ENCODE measurements at regions of chr15 and their contacts with region 1.

Region 1: DNA sequence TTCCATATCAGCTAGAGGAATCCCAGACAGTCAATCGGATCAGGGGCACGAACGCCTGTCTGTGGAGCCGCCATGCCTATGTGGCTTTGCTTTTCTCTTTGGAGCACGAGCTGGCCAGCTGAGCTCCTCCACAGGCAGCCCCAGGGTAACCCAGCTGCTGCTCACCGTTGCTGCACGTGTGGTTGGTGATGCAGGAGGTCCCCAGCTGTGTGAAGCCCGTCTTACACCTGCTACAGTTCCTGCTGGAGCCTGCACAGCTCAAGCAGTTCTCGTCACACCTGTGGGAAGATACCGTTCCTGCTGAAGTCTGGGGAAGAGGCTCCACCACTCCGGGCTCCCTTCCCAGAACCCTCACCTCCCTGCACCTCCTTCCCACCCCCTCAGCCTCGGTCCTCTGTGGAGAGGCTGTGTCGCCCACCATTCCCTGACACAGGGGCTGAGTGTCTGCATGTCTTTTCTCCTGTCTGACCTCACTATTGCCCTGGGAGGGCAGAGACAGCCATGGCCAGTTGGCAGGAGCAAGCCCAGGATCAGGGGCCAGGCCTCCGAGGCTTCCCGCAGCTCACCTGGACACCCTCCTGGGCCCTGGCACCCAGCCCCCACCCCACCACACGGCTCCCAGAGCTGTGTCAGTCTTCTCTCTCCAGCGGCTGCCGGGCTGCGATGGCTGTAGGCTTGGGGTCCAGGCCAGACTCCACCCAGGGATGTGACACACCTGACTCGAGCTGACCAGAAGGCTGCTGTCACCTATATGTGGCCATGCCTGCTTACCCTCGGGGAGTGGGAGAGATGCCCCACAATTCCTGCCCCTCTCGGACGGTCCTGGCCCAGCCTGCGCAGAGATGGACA is 12.2 kb upstream of the SNRPA1 start:
- DNase-seq: no peak
- ATAC-seq: no peak
- H3K4me3 ChIP-seq: no peak overlapping the region
- H3K27ac ChIP-seq: no peak overlapping the region
- H3K4me1 ChIP-seq: no peaks in the 10 kb centered on the region
- H3K27me3 ChIP-seq: no peaks in the 10 kb centered on the region
- CTCF ChIP-seq: no peak
- POLR2A ChIP-seq: no peak

Region 2: GRCh38 chr15:100809151-100809550 is 498.1 kb before region 1 on chr15:
- in situ Hi-C with region 1: no loop called
- intact Hi-C with region 1: no loop called
- DNase-seq: no peak
- ATAC-seq: no peak
- H3K4me3 ChIP-seq: no peak overlapping the region
- H3K27ac ChIP-seq: no peak overlapping the region
- H3K4me1 ChIP-seq: no peaks in the 10 kb centered on the region
- H3K27me3 ChIP-seq: no peaks in the 10 kb centered on the region
- CTCF ChIP-seq: no peak
- POLR2A ChIP-seq: no peak

Region 3: DNA sequence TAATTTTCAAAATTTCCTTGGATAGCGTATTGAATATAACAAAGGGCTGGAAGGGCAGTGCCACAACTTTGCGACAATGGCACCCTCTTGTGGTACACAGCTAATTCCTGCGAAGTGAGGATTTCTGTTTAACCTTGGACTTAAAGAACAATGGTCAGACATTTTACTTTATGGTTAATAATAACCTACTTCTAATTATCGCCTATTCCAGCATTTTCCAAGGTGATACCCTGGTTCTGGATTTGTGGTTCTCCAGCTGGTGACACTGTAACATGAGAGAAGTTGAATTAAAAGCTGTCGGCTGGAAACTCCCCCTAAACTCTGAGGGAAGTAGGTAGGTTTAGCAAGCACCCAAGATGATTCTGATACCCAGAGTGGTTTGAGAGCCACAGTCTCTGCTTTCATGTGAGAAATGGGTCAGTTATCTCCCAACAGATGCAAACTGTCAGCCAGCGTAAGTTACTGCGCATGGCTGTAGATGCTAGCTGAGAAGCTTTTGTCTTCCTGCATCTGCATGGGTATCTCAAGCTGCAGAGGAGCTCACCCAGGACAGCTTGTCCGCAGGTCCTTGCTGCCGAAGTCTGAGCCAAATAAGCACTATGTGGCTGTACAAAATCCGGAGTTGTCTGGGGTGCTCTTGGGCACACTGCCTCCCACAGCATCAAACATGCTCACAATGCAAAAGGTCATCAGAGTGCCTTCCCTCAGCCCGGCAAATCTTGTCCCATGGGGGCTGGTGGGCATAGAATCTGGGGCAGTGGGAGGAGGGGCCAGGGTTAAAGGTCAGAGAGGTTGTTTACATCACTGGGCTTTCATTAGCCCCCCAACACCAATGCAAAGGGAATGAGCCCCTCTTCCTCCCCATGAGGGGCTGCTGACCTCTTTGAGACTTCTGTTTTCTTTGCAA is 48.8 kb before region 1 on chr15:
- in situ Hi-C with region 1: no loop called
- intact Hi-C with region 1: no loop called
- DNase-seq: peak in 1 of 2 donors; percentile 45
- ATAC-seq: peak; percentile 67 to 82
- H3K4me3 ChIP-seq: no peak overlapping the region
- H3K27ac ChIP-seq: no peak overlapping the region
- H3K4me1 ChIP-seq: peaks cover 0 to 3% of the 10 kb centered on the region in 2 donors
- H3K27me3 ChIP-seq: no peaks in the 10 kb centered on the region
- CTCF ChIP-seq: peak; percentile 73 to 86 (median 79)
- POLR2A ChIP-seq: no peak

Region 4: DNA sequence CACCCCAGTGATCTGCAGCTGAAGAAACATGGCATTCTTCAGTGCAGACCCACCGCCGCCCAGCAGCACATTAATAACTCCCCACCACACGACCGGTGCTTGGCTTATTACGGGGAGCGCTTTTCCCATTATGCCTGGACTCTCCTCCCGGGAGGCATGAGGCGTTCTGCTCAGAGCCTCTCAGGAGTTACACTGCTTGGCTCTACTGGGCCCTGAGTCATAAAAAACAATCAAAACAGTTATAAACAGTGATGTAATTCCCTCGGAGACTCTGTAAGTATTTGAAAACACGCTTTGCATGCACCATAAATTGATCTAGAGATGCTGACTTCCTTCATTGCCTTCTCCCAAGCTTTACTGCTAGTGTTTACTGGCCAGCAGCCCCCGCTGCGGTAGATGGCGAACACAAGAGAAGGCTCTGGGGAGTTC is 64.9 kb after region 1 on chr15:
- in situ Hi-C with region 1: no loop called
- intact Hi-C with region 1: loop called (anchors 10 kb)
- DNase-seq: no peak
- ATAC-seq: peak in 1 of 2 donors; percentile 43
- H3K4me3 ChIP-seq: no peak overlapping the region
- H3K27ac ChIP-seq: no peak overlapping the region
- H3K4me1 ChIP-seq: peaks cover 2 to 6% of the 10 kb centered on the region in 2 donors
- H3K27me3 ChIP-seq: no peaks in the 10 kb centered on the region
- CTCF ChIP-seq: no peak
- POLR2A ChIP-seq: no peak

Region 5: DNA sequence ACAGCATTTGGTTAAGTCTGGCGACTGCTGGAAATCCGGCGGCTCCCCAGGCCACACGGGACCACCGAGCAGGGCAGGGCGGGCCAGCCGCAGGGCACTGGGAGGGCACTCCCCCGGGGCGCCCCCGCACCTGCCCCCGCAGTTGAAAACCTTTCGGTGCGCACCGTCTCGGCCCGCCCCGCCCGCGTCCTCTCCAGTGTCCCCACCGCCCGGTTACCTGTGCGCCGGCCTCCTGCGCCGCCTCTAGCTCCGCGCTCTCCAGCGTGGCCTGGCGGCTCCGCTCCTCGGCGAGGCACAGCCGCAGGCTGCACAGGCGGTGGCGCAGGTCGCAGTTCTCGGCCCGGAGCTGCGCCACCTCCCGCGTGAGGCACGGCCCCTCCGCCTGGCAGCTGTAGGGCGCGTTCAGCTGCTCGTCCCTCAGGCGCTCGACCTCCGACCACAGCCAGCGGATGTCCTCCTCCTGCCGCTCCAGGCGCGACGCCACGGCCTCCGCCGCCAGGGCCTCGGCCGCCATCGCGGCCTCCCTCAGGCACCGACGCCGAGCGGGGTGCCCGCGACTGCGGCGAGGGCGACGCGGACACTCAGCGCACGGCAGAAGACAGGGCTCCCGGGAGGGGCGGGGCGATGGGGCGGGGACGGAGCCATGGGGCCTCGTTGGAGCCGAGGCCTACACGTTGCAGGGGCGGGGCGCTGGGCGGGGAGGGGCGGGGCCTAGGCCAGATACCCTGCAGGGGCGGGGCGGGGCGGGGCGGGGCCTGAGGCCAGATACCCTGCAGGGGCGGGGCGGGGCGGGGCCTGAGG is 416.8 kb after region 1 on chr15 and contains the start of gene TARS3:
- in situ Hi-C with region 1: no loop called
- intact Hi-C with region 1: loop called (anchors 5 kb)
- DNase-seq: peak; percentile 95
- ATAC-seq: peak; percentile 96 to 97
- H3K4me3 ChIP-seq: peak within 1 kb of the TSS; percentile 79 to 90 (median 84)
- H3K27ac ChIP-seq: peak within 1 kb of the TSS; percentile 90 to 97 (median 97)
- H3K4me1 ChIP-seq: peaks cover 12 to 14% of the 10 kb centered on the region in 2 donors
- H3K27me3 ChIP-seq: no peaks in the 10 kb centered on the region
- CTCF ChIP-seq: peak in 4 of 5 experiments; percentile 16 to 39 (median 24)
- POLR2A ChIP-seq: peak; percentile 94 to 96
- total RNA-seq, gene TARS3: 38.3 to 69.9 (median 55.4) TPM